ENCODE measurements at regions of chr4 and their contacts with region 1.

Region 1: DNA sequence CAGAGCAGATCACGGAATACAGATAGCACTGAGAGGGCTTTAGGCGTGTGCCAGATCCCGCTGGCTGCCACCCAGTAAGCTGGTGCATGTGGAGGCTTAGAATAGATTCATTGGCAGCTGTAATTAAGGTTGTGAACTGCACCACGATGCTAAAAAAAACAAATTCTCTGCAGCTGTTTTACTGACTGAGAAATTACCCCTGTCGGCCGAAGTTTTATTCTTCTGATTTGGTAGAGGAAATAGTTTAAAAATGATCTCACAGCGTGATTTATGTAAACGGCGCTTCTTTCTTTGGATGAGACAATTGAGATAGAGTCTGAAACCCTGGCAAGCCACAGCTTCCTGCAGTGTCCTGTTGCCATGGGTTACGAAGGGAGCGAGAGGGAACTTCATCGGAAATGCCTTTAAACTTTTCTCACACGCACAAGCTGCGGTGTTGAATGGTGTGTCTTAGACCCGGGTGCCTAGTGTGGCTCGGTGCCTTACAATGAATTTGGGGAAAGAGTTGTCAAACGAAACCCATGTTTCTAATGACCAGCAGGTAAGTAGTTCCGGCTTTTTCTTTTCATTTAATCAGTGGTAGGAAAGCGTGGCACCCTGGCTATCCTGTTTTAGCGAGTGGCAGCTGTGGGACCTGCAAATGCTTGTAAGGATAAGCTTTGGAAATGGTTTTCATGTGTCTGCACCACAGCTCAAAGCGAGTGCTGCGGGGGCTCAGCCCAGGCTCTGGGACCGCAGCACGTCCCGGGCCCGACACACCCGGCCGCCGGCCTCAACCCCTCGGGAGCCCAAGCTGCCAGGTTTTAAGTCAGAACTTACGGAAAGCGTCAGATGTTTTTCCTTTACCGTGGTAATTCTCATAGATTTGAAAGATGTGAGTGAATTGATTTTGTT is 71.7 kb upstream of the HGFAC start:
- DNase-seq: peak; percentile 83
- H3K4me3 ChIP-seq: peak overlapping the region in 1 of 3 experiments; percentile 61
- H3K27ac ChIP-seq: peak overlapping the region; percentile 72
- H3K4me1 ChIP-seq: peaks cover 39% of the 10 kb centered on the region
- H3K27me3 ChIP-seq: no peaks in the 10 kb centered on the region
- CTCF ChIP-seq: no peak
- POLR2A ChIP-seq: no peak

Region 2: GRCh38 chr4:3305598-3306371 is 64.2 kb before region 1 on chr4:
- CTCF ChIA-PET with region 1: no interaction called
- POLR2A ChIA-PET with region 1: no interaction called
- dilution Hi-C with region 1: no loop called
- intact Hi-C with region 1: loop called (anchors 1 kb)
- DNase-seq: peak; percentile 95
- H3K4me3 ChIP-seq: no peak overlapping the region
- H3K27ac ChIP-seq: peak overlapping the region; percentile 83
- H3K4me1 ChIP-seq: peaks cover 63% of the 10 kb centered on the region
- H3K27me3 ChIP-seq: no peaks in the 10 kb centered on the region
- CTCF ChIP-seq: no peak
- POLR2A ChIP-seq: peak; percentile 70

Region 3: DNA sequence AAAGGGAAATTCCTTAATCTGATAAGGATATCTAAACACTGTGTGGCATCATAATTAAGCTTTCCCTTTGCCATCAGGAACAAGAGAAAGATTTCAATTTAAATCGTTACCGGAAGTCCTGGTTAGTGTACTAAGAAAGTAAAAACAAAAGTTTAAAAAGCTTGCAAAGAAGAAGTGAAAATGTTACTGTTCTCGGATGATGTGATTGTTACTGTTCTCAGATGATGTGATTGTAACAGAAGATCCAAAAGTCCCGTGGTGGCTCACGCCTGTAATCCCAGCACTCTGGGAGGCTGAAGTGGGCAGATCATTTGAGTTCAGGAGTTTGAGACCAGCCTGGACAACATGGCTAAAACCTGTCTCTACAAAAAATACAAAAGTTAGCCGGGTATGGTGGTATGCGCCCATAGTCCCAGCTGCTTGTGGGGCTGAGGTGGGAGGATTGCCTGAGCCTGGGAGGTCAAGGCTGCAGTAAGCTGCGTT is 14.7 kb before region 1 on chr4:
- CTCF ChIA-PET with region 1: interaction called, 5 read pairs
- POLR2A ChIA-PET with region 1: no interaction called
- dilution Hi-C with region 1: no loop called
- intact Hi-C with region 1: loop called (anchors 2 kb)
- DNase-seq: peak; percentile 60
- H3K4me3 ChIP-seq: no peak overlapping the region
- H3K27ac ChIP-seq: peak overlapping the region; percentile 52
- H3K4me1 ChIP-seq: peaks cover 24% of the 10 kb centered on the region
- H3K27me3 ChIP-seq: no peaks in the 10 kb centered on the region
- CTCF ChIP-seq: no peak
- POLR2A ChIP-seq: no peak

Region 4: DNA sequence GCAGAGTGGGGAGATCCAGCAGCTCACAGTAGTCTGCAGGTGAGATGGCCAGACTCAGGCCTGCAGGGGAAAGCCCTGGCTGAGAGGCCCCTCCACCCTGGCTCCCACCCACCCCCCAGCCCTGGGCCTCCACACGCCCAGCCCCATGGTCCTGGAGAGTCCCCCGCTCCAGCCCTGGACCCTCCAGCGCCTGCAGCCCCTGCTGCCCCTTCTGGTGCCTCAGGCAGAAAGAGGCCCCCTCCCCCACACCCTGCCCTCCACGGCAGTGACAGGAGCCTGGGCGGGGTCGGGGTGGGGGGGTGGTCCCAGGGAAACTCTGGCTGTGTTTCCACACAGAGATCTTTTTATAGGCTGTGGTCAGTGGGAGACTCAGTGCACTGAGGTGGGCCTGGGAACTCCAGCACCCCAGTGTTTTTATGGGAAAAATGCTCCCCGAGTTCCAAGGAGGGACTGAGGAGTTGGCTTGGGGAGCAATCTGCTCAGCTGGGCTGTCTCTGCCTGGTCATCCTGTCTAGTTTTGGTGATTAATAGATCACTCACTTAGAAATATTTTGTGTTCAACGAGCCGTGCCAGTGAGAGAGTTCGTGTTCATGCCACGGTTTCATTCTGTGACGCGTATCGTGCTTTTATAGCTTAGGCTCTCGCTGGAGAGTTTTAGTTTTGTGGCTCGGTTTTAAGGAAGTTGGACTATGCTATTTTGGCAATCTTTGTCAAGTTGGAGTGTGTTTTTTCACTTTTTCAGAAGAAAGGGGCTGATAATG is 18.6 kb after region 1 on chr4:
- CTCF ChIA-PET with region 1: interaction called, 15 read pairs
- POLR2A ChIA-PET with region 1: no interaction called
- dilution Hi-C with region 1: no loop called
- intact Hi-C with region 1: no loop called
- DNase-seq: peak; percentile 35
- H3K4me3 ChIP-seq: peak overlapping the region in 1 of 3 experiments; percentile 30
- H3K27ac ChIP-seq: peak overlapping the region; percentile 24
- H3K4me1 ChIP-seq: peaks cover 37% of the 10 kb centered on the region
- H3K27me3 ChIP-seq: no peaks in the 10 kb centered on the region
- CTCF ChIP-seq: no peak
- POLR2A ChIP-seq: no peak

Measured in endothelial cell of umbilical vein (primary cell).